ENCODE measurements at regions of chr19 and their contacts with region 1.

Region 1: GRCh38 chr19:46728693-46729676 is 12.1 kb upstream of the PRKD2 start:
- DNase-seq: peak; percentile 75 to 87 (median 78)
- H3K4me3 ChIP-seq: no peak overlapping the region
- H3K4me3 Mint-ChIP-seq: no peak overlapping the region
- H3K27ac ChIP-seq: peak overlapping the region; percentile 7
- H3K27ac Mint-ChIP-seq: peak overlapping the region in 6 of 8 donors; percentile 13 to 91 (median 66)
- H3K4me1 ChIP-seq: peaks cover 6% of the 10 kb centered on the region
- H3K4me1 Mint-ChIP-seq: peaks cover 10 to 17% (median 12%) of the 10 kb centered on the region in 3 donors
- H3K27me3 ChIP-seq: no peaks in the 10 kb centered on the region
- H3K27me3 Mint-ChIP-seq: no peaks in the 10 kb centered on the region

Region 2: GRCh38 chr19:46586303-46587001 is 142.5 kb before region 1 on chr19:
- CTCF ChIA-PET with region 1: no interaction called
- POLR2A ChIA-PET with region 1: no interaction called
- DNase-seq: no peak
- H3K4me3 ChIP-seq: no peak overlapping the region
- H3K4me3 Mint-ChIP-seq: no peak overlapping the region
- H3K27ac ChIP-seq: no peak overlapping the region
- H3K27ac Mint-ChIP-seq: no peak overlapping the region
- H3K4me1 ChIP-seq: no peaks in the 10 kb centered on the region
- H3K4me1 Mint-ChIP-seq: no peaks in the 10 kb centered on the region
- H3K27me3 ChIP-seq: no peaks in the 10 kb centered on the region
- H3K27me3 Mint-ChIP-seq: peaks cover 0 to 2% of the 10 kb centered on the region in 2 donors

Region 3: GRCh38 chr19:46605356-46605821 is 123.6 kb before region 1 on chr19:
- CTCF ChIA-PET with region 1: no interaction called
- POLR2A ChIA-PET with region 1: no interaction called
- DNase-seq: no peak
- H3K4me3 ChIP-seq: no peak overlapping the region
- H3K4me3 Mint-ChIP-seq: peak overlapping the region in 2 of 7 donors; percentile 36 to 58
- H3K27ac ChIP-seq: no peak overlapping the region
- H3K27ac Mint-ChIP-seq: peak overlapping the region in 4 of 8 donors; percentile 40 to 67 (median 56)
- H3K4me1 ChIP-seq: peaks cover 32% of the 10 kb centered on the region
- H3K4me1 Mint-ChIP-seq: peaks cover 36 to 56% (median 48%) of the 10 kb centered on the region in 3 donors
- H3K27me3 ChIP-seq: no peaks in the 10 kb centered on the region
- H3K27me3 Mint-ChIP-seq: peaks cover 0 to 5% of the 10 kb centered on the region in 2 donors

Region 4: GRCh38 chr19:46710687-46711086 is 18.3 kb before region 1 on chr19:
- CTCF ChIA-PET with region 1: interaction called, 124 read pairs
- POLR2A ChIA-PET with region 1: interaction called, 11 read pairs
- DNase-seq: no peak
- H3K4me3 ChIP-seq: no peak overlapping the region
- H3K4me3 Mint-ChIP-seq: no peak overlapping the region
- H3K27ac ChIP-seq: no peak overlapping the region
- H3K27ac Mint-ChIP-seq: no peak overlapping the region
- H3K4me1 ChIP-seq: peaks cover 16% of the 10 kb centered on the region
- H3K4me1 Mint-ChIP-seq: peaks cover 26 to 33% (median 33%) of the 10 kb centered on the region in 3 donors
- H3K27me3 ChIP-seq: no peaks in the 10 kb centered on the region
- H3K27me3 Mint-ChIP-seq: no peaks in the 10 kb centered on the region

Region 5: GRCh38 chr19:46717034-46717723 is 11.8 kb before region 1 on chr19 and contains the start of gene PRKD2:
- CTCF ChIA-PET with region 1: interaction called, 28 read pairs
- POLR2A ChIA-PET with region 1: interaction called, 8 read pairs
- DNase-seq: peak; percentile 71 to 89 (median 83)
- H3K4me3 ChIP-seq: peak within 1 kb of the TSS; percentile 90
- H3K4me3 Mint-ChIP-seq: peak within 1 kb of the TSS; percentile 94 to 98 (median 95)
- H3K27ac ChIP-seq: peak within 1 kb of the TSS; percentile 92
- H3K27ac Mint-ChIP-seq: peak within 1 kb of the TSS; percentile 94 to 99 (median 98)
- H3K4me1 ChIP-seq: peaks cover 37% of the 10 kb centered on the region
- H3K4me1 Mint-ChIP-seq: peaks cover 42 to 77% (median 49%) of the 10 kb centered on the region in 3 donors
- H3K27me3 ChIP-seq: no peaks in the 10 kb centered on the region
- H3K27me3 Mint-ChIP-seq: no peaks in the 10 kb centered on the region
- total RNA-seq, gene PRKD2: 61.6 to 63.8 TPM

Region 6: DNA sequence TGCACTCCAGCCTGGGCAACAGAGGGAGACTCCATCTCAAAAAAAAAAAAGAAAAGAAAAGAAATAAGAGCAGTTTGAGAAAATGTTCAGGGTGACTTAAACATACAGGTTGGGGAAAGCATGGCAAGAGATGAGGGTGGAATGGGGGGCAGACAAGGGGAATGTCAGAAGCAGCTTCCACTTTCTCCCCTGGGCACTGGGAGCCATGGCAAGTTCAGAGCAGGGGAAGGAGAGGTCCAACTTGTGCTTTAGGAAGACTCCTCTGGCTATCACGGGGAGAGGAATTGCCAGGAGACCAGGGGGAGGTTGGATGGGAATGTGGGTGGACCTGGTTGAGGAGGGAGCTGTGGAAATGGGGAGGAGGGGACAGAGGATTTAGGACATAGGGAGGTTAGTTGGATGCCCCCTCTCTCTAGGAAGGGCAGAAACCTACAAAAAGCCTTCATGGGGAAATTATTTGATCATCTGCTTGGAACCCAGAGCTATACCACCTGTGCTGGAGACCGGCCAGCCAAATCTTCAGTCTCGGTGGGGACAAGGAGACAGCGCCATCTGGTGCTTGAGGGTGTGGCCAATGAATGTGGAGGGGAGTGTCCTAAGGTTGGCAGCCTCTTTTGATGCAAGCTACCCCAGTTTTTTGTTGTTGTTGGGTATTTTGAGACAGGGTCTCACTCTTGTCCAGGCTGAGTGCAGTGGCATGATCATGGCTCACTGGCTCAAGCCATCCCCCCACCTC is 24.6 kb after region 1 on chr19:
- CTCF ChIA-PET with region 1: interaction called, 10 read pairs
- POLR2A ChIA-PET with region 1: interaction called, 3 read pairs
- DNase-seq: peak; percentile 45 to 76 (median 54)
- H3K4me3 ChIP-seq: no peak overlapping the region
- H3K4me3 Mint-ChIP-seq: peak overlapping the region in 1 of 7 donors; percentile 9
- H3K27ac ChIP-seq: no peak overlapping the region
- H3K27ac Mint-ChIP-seq: peak overlapping the region in 2 of 8 donors; percentile 72 to 89
- H3K4me1 ChIP-seq: no peaks in the 10 kb centered on the region
- H3K4me1 Mint-ChIP-seq: peaks cover 9 to 18% (median 13%) of the 10 kb centered on the region in 3 donors
- H3K27me3 ChIP-seq: no peaks in the 10 kb centered on the region
- H3K27me3 Mint-ChIP-seq: no peaks in the 10 kb centered on the region

Region 7: GRCh38 chr19:46785054-46785979 is 56.3 kb after region 1 on chr19:
- CTCF ChIA-PET with region 1: no interaction called
- POLR2A ChIA-PET with region 1: no interaction called
- DNase-seq: no peak
- H3K4me3 ChIP-seq: peak overlapping the region; percentile 88
- H3K4me3 Mint-ChIP-seq: peak overlapping the region; percentile 87 to 97 (median 92)
- H3K27ac ChIP-seq: peak overlapping the region; percentile 92
- H3K27ac Mint-ChIP-seq: peak overlapping the region; percentile 95 to 100 (median 96)
- H3K4me1 ChIP-seq: peaks cover 45% of the 10 kb centered on the region
- H3K4me1 Mint-ChIP-seq: peaks cover 53 to 61% (median 61%) of the 10 kb centered on the region in 3 donors
- H3K27me3 ChIP-seq: no peaks in the 10 kb centered on the region
- H3K27me3 Mint-ChIP-seq: no peaks in the 10 kb centered on the region

Measured in CD8-positive, alpha-beta memory T cell (primary cell).